HCT116 (cell line): ENCODE measurements at regions of chr3 and their contacts with region 1.

Region 1: DNA sequence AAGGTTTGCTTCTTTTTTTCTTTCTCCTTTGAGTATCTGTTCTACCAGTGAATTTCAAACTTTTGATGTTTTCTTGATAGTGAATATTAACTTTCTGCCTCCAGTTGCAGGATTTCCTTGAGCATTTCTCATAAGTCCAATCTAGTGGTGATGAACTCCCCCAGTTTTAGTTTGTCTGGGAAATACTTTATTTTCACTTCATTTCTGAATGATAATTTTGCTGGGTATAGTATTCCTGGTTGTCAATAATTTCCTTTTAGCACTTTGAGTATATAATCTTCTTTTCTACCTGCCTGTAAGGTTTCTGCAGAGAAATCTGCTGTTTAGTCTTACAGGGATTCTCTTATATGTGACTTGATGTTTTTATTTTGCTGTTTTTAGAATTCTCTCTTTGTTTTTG is 21.0 kb downstream of the TPRG1 start:
- DNase-seq: no peak
- ATAC-seq: no peak
- H3K4me3 ChIP-seq: no peak overlapping the region
- H3K27ac ChIP-seq: no peak overlapping the region
- H3K4me1 ChIP-seq: no peaks in the 10 kb centered on the region
- H3K27me3 ChIP-seq: no peaks in the 10 kb centered on the region
- CTCF ChIP-seq: no peak
- POLR2A ChIP-seq: no peak
- RAD21 ChIP-seq: no peak

Region 2: DNA sequence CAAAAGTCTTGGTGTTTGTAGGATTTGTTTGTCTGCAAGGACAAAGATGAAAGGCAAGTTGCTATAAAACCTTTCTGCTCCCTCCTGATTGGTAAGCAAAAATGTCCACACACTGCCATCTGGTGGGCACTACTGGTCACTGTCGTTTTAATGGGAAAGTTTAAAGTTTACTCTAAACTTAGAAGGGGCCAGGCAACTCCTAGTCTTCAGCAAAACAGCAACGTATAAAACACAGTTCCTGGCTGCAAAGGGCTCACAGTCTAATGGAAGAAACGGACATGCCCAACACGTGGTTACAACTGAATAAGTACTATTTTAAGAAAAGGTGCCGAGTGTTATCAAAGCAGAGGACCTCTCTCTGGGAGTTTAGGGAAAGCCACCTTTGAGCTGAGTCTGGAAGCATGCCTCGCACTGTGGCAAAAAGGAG is 44.6 kb before region 1 on chr3:
- CTCF ChIA-PET with region 1: no interaction called
- POLR2A ChIA-PET with region 1: no interaction called
- RAD21 ChIA-PET with region 1: no interaction called
- intact Hi-C with region 1: no loop called
- DNase-seq: peak; percentile 37
- ATAC-seq: peak; percentile 85
- H3K4me3 ChIP-seq: no peak overlapping the region
- H3K27ac ChIP-seq: no peak overlapping the region
- H3K4me1 ChIP-seq: peaks cover 4 to 5% of the 10 kb centered on the region in 2 experiments; a peak in 2 of 4 replicates
- H3K27me3 ChIP-seq: no peaks in the 10 kb centered on the region
- CTCF ChIP-seq: peak; percentile 71 to 85 (median 79); a peak in 5 of 6 replicates
- POLR2A ChIP-seq: no peak
- RAD21 ChIP-seq: peak; percentile 89

Region 3: GRCh38 chr3:189276481-189277219 is 83.9 kb after region 1 on chr3:
- CTCF ChIA-PET with region 1: no interaction called
- POLR2A ChIA-PET with region 1: no interaction called
- RAD21 ChIA-PET with region 1: no interaction called
- intact Hi-C with region 1: no loop called
- DNase-seq: no peak
- ATAC-seq: 0 out of 2 replicates have a peak, but pooled peaks have one; percentile 18
- H3K4me3 ChIP-seq: no peak overlapping the region
- H3K27ac ChIP-seq: no peak overlapping the region
- H3K4me1 ChIP-seq: peaks cover 8 to 10% of the 10 kb centered on the region in 2 experiments; a peak in 3 of 4 replicates
- H3K27me3 ChIP-seq: no peaks in the 10 kb centered on the region; the same call in 1 of the 2 replicates
- CTCF ChIP-seq: no peak
- POLR2A ChIP-seq: no peak
- RAD21 ChIP-seq: no peak

Region 4: DNA sequence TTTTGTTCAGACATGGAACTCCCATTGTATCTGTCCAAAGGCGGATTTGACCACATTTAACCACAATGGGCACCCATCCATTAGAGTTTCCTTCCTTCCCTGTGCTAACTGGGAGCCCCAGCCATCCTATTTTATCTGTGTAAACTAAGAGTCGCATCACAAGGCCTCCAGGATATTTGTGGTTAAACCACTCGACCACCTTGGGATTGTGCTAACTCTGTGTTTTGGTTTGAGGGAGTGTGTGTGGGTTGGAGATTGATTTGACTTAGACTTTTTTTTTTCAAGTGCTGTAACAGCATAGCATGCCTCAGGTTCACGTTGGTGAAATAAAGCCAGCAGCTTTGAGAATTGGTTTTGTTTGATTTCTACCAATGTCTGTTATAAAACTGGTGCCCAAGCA is 338.1 kb after region 1 on chr3:
- CTCF ChIA-PET with region 1: no interaction called
- POLR2A ChIA-PET with region 1: no interaction called
- RAD21 ChIA-PET with region 1: no interaction called
- intact Hi-C with region 1: loop called (anchors 5 kb)
- DNase-seq: peak; percentile 19
- ATAC-seq: peak; percentile 59
- H3K4me3 ChIP-seq: no peak overlapping the region
- H3K27ac ChIP-seq: no peak overlapping the region
- H3K4me1 ChIP-seq: peaks cover 12 to 16% of the 10 kb centered on the region in 2 experiments
- H3K27me3 ChIP-seq: no peaks in the 10 kb centered on the region
- CTCF ChIP-seq: no peak
- POLR2A ChIP-seq: no peak
- RAD21 ChIP-seq: no peak